Calu3 (cell line): ENCODE measurements at regions of chr17 and their contacts with region 1.

Region 1: GRCh38 chr17:2847381-2848333 is 51.4 kb downstream of the RAP1GAP2 start:
- DNase-seq: no peak
- H3K4me3 Mint-ChIP-seq: no peak overlapping the region
- H3K27ac Mint-ChIP-seq: no peak overlapping the region
- H3K4me1 Mint-ChIP-seq: peaks cover 5% of the 10 kb centered on the region
- H3K27me3 Mint-ChIP-seq: no peaks in the 10 kb centered on the region
- CTCF ChIP-seq: no peak

Region 2: GRCh38 chr17:2814481-2815341 is 32.9 kb before region 1 on chr17:
- CTCF ChIA-PET with region 1: no interaction called
- intact Hi-C with region 1: no loop called
- DNase-seq: no peak
- H3K4me3 Mint-ChIP-seq: no peak overlapping the region
- H3K27ac Mint-ChIP-seq: no peak overlapping the region
- H3K4me1 Mint-ChIP-seq: peaks cover 8% of the 10 kb centered on the region
- H3K27me3 Mint-ChIP-seq: no peaks in the 10 kb centered on the region
- CTCF ChIP-seq: no peak

Region 3: DNA sequence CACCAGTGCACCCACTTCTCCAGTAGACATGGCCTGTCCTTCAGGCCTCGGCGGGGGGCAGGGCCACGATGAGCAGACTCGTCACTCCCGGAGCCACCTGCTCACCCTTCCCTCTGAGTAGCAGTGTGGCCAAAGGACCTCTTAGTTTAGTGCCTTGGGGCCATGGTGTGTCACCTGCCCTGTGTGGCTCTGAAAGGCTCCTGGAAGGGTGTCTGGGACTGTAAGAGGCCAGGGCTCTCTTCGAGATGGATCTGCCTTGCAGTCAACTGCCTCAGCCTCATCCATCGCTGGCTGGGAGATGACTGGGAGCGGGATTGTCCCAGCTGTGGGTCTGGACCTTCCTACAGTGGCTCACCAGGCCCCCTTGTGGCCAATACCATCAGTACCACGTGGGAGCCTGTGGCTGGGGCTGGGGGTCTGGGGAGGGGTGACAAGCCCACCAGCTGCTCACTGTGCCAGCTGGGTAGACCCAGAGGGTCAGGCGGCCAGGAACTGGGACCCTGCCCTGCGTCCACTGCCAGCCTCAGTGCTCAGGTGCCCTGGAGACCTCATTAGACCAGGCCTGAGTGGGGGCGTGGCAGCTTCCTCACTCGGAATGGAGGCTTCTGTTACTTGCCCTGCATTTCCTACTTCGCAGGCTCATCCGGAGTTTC is 82.3 kb after region 1 on chr17:
- CTCF ChIA-PET with region 1: interaction called, 8 read pairs
- intact Hi-C with region 1: loop called (anchors 1 kb)
- DNase-seq: peak; percentile 52
- H3K4me3 Mint-ChIP-seq: no peak overlapping the region
- H3K27ac Mint-ChIP-seq: no peak overlapping the region
- H3K4me1 Mint-ChIP-seq: no peaks in the 10 kb centered on the region
- H3K27me3 Mint-ChIP-seq: no peaks in the 10 kb centered on the region
- CTCF ChIP-seq: peak; percentile 86

Region 4: DNA sequence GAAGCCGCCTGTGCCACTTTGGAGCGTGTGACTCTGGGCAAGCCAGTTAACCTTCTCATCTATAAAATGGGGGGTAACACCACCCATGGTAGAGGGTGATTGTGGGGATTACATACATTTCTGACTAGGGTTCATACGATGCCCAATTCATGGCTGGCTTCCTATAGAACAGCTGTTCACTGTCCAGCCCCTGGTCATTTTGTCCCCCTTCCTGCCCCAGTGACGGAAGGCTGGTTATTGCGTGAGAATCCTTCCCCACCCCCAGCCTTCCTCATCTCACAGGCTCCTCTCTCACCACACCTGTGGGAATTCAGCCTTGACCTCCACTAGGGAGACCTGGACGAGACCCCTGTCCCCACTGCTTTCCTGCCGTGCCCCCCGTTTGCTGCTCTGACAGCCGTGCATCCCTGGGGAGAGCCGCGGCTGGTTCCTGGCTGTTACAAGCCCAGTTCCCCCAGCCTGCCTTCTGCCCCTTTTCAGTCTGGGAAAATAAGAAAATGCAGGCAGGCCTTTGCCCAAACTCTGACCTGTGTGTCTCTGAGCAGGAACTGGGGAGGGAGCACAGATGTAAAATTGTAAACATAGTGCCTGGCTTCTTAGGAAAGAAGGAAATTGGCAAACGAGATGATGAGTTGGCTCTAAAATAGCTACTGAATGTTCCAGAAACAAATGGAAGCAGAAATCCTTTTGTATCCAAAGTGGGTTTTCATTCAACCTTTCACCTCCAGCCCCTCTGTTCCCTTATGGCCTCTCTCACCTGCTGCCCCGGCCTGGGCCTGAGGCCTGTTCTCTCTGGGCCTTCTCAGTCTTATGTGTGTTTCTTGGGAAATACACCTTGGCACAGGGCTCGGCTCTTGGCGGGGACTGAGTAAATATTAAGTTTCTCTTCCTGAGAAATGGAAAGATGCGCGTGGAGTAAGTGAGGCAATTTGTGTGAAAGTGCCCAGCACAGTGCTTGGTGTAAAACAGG is 148.5 kb after region 1 on chr17:
- CTCF ChIA-PET with region 1: no interaction called
- intact Hi-C with region 1: no loop called
- DNase-seq: no peak
- H3K4me3 Mint-ChIP-seq: no peak overlapping the region
- H3K27ac Mint-ChIP-seq: no peak overlapping the region
- H3K4me1 Mint-ChIP-seq: no peaks in the 10 kb centered on the region
- H3K27me3 Mint-ChIP-seq: no peaks in the 10 kb centered on the region
- CTCF ChIP-seq: no peak

Region 5: GRCh38 chr17:3012926-3013581 is 165.4 kb after region 1 on chr17:
- CTCF ChIA-PET with region 1: interaction called, 10 read pairs
- intact Hi-C with region 1: loop called (anchors 5 kb)
- DNase-seq: peak; percentile 63
- H3K4me3 Mint-ChIP-seq: no peak overlapping the region
- H3K27ac Mint-ChIP-seq: no peak overlapping the region
- H3K4me1 Mint-ChIP-seq: no peaks in the 10 kb centered on the region
- H3K27me3 Mint-ChIP-seq: no peaks in the 10 kb centered on the region
- CTCF ChIP-seq: peak; percentile 40